Caco-2 (cell line): ENCODE measurements at regions of chr11 and their contacts with region 1.

Region 1: DNA sequence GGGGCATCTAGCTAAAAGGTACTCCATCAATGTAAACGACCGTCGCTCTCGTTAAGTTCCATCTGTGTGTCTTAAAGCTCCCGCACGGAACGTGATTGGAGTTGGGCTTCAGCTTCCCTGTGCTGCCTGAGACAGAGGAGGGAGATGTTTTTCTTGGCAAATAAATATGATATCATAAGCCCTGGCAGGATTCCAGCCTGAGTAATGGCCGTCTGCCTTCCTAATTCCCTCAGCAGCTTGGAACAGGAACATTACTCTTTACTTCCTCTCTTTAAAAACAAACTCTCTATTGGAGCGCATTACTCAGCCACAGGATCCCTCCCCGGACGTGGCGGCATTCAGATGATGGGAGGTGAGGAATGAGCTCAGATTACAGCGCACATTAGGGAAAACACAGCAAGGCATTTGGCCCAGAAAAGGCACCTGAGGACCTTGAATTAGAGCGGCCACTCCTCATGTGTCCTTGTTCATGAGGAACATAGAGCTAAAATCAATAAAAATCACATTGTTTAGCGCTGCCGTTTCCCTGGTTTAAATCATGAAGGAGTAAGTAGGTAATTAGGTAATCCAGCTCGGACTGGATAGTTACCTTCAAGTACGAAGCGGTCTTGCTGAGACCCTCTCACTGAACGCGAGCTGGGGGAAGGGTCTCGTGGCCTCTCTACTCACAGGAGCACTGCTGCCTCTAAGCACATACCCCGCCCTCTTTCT is 230.4 kb downstream of the ST3GAL4 start:
- DNase-seq: no peak
- H3K4me3 ChIP-seq: no peak overlapping the region
- H3K4me3 Mint-ChIP-seq: no peak overlapping the region
- H3K27ac Mint-ChIP-seq: no peak overlapping the region
- H3K4me1 ChIP-seq: no peaks in the 10 kb centered on the region
- H3K4me1 Mint-ChIP-seq: no peaks in the 10 kb centered on the region
- H3K27me3 ChIP-seq: peaks cover 2% of the 10 kb centered on the region
- H3K27me3 Mint-ChIP-seq: peaks cover 14% of the 10 kb centered on the region
- CTCF ChIP-seq: no peak

Region 2: DNA sequence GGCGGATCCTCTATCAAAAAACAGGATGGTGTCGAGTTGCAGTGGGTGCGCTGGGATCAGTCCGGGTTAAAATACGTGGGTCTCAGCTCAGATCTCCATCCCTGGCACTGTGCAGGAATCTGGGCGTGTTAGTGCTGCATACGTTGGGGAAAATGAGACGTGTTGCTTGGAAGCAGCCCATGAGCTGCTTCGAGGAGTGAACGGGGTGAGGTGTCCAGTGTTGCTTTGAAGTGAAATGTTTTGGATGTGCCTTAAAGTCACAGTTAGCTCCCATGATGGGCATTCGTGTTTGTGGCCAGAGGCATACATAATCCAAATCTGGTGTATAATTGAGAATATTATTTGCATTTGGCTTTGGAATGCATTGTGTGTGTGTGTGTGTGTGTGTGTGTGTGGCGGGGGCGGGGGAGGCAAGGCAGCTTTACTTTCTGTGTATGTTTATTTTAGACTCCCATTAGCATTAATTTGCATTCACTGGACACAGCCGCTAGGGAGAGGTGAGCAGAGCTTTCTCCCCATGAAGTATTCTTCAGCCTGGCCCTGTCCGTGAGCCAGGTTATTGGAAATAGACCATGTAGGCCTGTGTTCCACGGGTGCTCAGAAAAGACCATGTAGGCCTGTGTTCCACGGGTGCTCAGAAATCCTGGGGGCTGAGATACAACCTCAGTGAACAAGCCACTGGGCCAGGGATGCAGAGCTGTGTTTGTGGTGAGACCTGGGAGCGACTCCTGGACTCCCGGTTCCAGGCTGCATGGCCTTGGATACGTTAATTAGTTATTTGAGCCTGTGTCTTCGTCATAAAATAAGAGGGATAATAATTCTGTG is 95.9 kb before region 1 on chr11:
- CTCF ChIA-PET with region 1: interaction called, 10 read pairs
- POLR2A ChIA-PET with region 1: no interaction called
- intact Hi-C with region 1: no loop called
- DNase-seq: no peak
- H3K4me3 ChIP-seq: no peak overlapping the region
- H3K4me3 Mint-ChIP-seq: no peak overlapping the region
- H3K27ac Mint-ChIP-seq: no peak overlapping the region
- H3K4me1 ChIP-seq: no peaks in the 10 kb centered on the region
- H3K4me1 Mint-ChIP-seq: no peaks in the 10 kb centered on the region
- H3K27me3 ChIP-seq: no peaks in the 10 kb centered on the region; the same call in 1 of the 2 replicates
- H3K27me3 Mint-ChIP-seq: peaks cover 23% of the 10 kb centered on the region
- CTCF ChIP-seq: no peak